Endothelial cell of umbilical vein (primary cell): ENCODE measurements at regions of chr6 and their contacts with region 1.

Region 1: DNA sequence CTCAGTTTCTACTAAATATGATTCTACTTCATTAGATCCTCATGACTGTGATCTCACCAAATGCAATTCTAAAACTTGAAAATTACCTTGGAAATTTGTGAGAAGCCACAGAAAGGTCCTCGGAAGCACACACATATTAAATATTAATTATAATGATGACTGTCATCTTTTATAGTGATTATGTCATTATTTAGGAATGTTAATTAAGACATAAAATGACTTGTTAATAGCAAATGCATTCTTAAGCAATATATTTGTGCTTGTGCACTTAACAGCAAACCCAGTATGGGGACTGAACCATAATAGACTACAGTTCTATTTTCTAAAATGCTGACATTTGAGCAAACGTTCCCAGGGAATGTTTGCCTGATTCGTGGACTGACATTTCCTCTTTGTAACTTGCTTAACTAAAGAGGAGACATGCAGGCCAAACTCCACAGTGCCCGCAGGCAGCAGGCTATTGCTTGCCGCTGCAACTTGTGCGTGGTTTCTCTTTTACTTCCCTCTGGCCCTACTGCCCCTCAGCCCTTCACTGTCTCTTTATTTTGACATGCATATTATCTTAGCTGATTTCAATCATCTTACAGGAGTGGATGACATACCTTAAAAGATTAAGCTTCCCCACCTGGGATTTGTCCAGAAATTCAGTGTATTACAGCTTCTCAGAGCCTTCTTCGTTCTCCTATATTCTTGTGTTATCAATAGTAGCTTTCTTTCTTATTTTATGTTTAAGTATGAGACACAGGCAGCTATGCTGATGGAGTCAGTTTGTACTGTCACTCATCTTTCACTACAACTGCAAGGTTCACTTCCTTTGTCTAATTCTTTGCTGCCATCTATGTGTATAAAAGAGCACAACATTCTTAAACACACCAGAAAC is 141.5 kb downstream of the GMDS start:
- DNase-seq: peak; percentile 84
- H3K4me3 ChIP-seq: peak overlapping the region in 2 of 3 experiments; percentile 1 to 47
- H3K27ac ChIP-seq: peak overlapping the region; percentile 46
- H3K4me1 ChIP-seq: peaks cover 21% of the 10 kb centered on the region
- H3K27me3 ChIP-seq: no peaks in the 10 kb centered on the region
- CTCF ChIP-seq: peak; percentile 37 to 40
- POLR2A ChIP-seq: no peak

Region 2: GRCh38 chr6:1609648-1610496 is 494.0 kb before region 1 on chr6 and contains the start of gene FOXC1:
- CTCF ChIA-PET with region 1: interaction called, 49 read pairs
- POLR2A ChIA-PET with region 1: interaction called, 5 read pairs
- dilution Hi-C with region 1: loop called (anchors 25 kb)
- intact Hi-C with region 1: loop called (anchors 1 kb)
- DNase-seq: peak; percentile 97
- H3K4me3 ChIP-seq: peak within 1 kb of the TSS; percentile 69 to 89 (median 87)
- H3K27ac ChIP-seq: peak within 1 kb of the TSS; percentile 70
- H3K4me1 ChIP-seq: no peaks in the 10 kb centered on the region
- H3K27me3 ChIP-seq: peaks cover 10 to 13% of the 10 kb centered on the region in 2 experiments
- CTCF ChIP-seq: no peak
- POLR2A ChIP-seq: peak; percentile 88
- total RNA-seq, gene FOXC1: 15.9 and 16.4 TPM in 2 replicates

Region 3: GRCh38 chr6:1686117-1687098 is 417.5 kb before region 1 on chr6:
- CTCF ChIA-PET with region 1: interaction called, 9 read pairs
- POLR2A ChIA-PET with region 1: no interaction called
- dilution Hi-C with region 1: no loop called
- intact Hi-C with region 1: loop called (anchors 2 kb)
- DNase-seq: peak; percentile 71
- H3K4me3 ChIP-seq: no peak overlapping the region
- H3K27ac ChIP-seq: no peak overlapping the region
- H3K4me1 ChIP-seq: peaks cover 13% of the 10 kb centered on the region
- H3K27me3 ChIP-seq: no peaks in the 10 kb centered on the region
- CTCF ChIP-seq: peak; percentile 12 to 26
- POLR2A ChIP-seq: no peak

Region 4: DNA sequence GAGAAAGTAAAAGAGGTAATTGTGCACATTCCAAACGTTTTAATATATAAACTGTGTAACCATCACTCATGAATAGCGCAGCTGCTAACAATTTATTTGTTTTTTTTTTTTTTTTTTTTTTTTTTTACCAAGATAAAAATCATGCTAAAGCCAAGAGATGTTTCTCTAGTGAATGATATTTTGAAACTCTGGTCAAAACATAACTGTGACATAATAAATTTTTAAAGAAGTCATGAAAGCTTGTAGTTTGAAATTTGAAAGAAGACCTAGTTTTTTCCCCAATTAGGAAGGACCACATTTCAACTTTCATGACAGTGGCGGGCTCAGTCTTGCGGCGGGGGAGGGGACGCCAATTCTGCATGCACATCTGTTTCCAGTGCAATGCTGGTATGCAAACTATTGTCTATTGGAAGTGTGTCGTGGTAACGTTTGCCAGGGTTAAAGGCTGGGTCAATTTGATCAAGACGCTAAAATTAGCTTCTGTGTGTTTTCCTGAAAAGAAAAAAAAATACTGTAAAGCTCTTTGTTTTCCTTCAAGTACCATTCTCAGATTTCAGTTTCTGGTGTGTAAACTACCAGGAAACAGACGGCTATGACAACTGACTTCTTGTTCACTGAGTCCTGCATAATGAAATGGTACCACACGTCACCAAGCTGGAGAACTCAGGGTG is 282.2 kb before region 1 on chr6:
- CTCF ChIA-PET with region 1: no interaction called
- POLR2A ChIA-PET with region 1: no interaction called
- dilution Hi-C with region 1: no loop called
- intact Hi-C with region 1: loop called (anchors 1 kb)
- DNase-seq: peak; percentile 89
- H3K4me3 ChIP-seq: no peak overlapping the region
- H3K27ac ChIP-seq: peak overlapping the region; percentile 65
- H3K4me1 ChIP-seq: peaks cover 37% of the 10 kb centered on the region
- H3K27me3 ChIP-seq: no peaks in the 10 kb centered on the region
- CTCF ChIP-seq: no peak
- POLR2A ChIP-seq: no peak

Region 5: DNA sequence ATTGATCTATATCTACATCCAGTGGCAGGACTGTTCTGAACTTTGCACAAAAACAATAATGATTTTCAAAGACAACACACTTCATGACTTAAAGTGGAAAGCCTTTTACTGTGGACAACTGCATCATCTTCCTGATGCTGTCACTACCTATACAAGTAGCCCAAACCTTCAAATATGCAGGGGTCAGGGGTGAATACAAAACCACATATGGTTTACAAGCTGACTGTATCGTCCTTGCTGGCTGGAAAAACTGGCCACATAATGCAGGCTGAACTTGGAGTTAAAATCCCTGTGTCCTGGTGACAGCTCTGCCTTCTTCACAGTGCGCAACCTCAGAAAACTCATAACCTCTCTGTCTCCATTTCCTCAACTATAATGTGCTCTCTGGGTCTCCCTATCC is 12.6 kb after region 1 on chr6:
- CTCF ChIA-PET with region 1: no interaction called
- POLR2A ChIA-PET with region 1: no interaction called
- dilution Hi-C with region 1: no loop called
- intact Hi-C with region 1: no loop called
- DNase-seq: no peak
- H3K4me3 ChIP-seq: no peak overlapping the region
- H3K27ac ChIP-seq: no peak overlapping the region
- H3K4me1 ChIP-seq: peaks cover 29% of the 10 kb centered on the region
- H3K27me3 ChIP-seq: no peaks in the 10 kb centered on the region
- CTCF ChIP-seq: no peak
- POLR2A ChIP-seq: no peak

Region 6: DNA sequence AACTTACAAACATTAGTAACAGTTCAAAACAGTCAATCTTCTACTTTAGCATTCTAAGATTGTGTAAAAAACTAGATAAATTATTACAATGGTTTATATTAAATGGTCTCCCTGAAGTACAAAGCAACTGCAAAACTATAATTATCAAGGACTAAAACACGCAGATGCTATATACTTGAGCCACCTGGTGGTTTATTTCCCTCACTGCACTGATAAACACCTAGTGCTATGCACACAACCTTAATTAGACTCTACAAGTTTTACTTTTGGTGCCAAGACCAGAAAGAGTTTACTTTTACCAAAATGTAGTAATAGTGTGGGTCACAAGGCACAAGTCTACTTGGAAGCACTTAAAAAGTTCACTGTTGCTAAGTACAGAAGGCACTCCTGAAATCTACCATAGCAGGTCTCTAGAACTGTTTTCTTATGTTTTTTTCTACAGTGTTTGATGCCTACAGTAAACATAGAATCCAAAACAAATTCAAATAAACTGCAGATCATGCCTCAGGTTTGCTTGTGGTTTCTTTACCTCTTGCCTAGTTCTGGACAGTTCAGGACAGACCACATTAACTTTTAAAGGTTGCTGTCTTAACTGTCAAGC is 92.3 kb after region 1 on chr6:
- CTCF ChIA-PET with region 1: interaction called, 13 read pairs
- POLR2A ChIA-PET with region 1: no interaction called
- dilution Hi-C with region 1: no loop called
- intact Hi-C with region 1: loop called (anchors 1 kb)
- DNase-seq: peak; percentile 88
- H3K4me3 ChIP-seq: no peak overlapping the region
- H3K27ac ChIP-seq: no peak overlapping the region
- H3K4me1 ChIP-seq: peaks cover 11% of the 10 kb centered on the region
- H3K27me3 ChIP-seq: no peaks in the 10 kb centered on the region
- CTCF ChIP-seq: peak; percentile 50 to 53
- POLR2A ChIP-seq: no peak

Region 7: GRCh38 chr6:2765166-2765895 is 661.4 kb after region 1 on chr6 and contains the start of gene WRNIP1:
- CTCF ChIA-PET with region 1: no interaction called
- POLR2A ChIA-PET with region 1: no interaction called
- dilution Hi-C with region 1: no loop called
- intact Hi-C with region 1: no loop called
- DNase-seq: peak; percentile 99
- H3K4me3 ChIP-seq: peak within 1 kb of the TSS; percentile 72 to 98 (median 97)
- H3K27ac ChIP-seq: peak within 1 kb of the TSS; percentile 79
- H3K4me1 ChIP-seq: peaks cover 40% of the 10 kb centered on the region
- H3K27me3 ChIP-seq: no peaks in the 10 kb centered on the region
- CTCF ChIP-seq: peak; percentile 65 to 66
- POLR2A ChIP-seq: no peak
- total RNA-seq, gene WRNIP1: 47.7 and 50.1 TPM in 2 replicates